Heart left ventricle (tissue), 16 donors: ENCODE measurements at regions of chr11 and their contacts with region 1.

Region 1: DNA sequence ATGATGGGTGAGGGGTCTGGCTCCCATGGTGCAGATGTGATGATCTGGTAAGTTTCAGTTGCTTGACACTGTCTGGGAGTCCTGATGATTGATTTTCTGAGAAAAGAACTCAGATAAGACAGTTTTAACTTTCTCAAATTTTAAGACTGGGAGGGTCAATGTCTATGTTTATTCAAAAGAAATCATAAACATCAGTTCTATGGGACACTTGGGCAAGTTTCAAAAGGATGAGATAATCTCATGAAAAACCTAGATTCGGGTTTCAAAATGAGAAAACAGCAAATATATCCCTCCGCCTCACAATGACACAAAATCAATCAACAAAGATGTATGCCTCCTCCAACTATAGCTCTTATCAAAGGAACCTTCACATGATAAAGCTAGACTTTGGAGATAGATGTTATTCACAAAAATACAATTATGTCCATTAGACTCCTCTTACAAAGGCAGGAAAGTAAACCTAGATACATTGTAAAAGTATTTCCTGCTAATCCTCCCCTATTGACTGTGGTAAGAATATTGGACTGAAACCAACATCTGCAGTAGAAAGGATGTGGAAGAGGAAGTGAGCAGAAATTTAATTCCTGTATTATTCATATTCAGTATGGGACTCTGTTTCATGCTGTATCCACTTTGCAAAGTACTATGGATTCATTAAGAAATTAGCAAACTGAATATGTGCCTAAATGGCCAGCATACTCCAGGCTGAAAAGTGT is 21.6 kb downstream of the SVIP start:
- DNase-seq: no peak
- ATAC-seq: peak in 2 of 4 donors; percentile 59 to 91
- H3K4me3 ChIP-seq: no peak overlapping the region
- H3K27ac ChIP-seq: peak overlapping the region in 10 of 12 donors; percentile 12 to 66 (median 54)
- H3K4me1 ChIP-seq: peaks cover 0 to 25% (median 17%) of the 10 kb centered on the region in 12 donors
- H3K27me3 ChIP-seq: no peaks in the 10 kb centered on the region
- CTCF ChIP-seq: no peak
- POLR2A ChIP-seq: no peak

Region 2: DNA sequence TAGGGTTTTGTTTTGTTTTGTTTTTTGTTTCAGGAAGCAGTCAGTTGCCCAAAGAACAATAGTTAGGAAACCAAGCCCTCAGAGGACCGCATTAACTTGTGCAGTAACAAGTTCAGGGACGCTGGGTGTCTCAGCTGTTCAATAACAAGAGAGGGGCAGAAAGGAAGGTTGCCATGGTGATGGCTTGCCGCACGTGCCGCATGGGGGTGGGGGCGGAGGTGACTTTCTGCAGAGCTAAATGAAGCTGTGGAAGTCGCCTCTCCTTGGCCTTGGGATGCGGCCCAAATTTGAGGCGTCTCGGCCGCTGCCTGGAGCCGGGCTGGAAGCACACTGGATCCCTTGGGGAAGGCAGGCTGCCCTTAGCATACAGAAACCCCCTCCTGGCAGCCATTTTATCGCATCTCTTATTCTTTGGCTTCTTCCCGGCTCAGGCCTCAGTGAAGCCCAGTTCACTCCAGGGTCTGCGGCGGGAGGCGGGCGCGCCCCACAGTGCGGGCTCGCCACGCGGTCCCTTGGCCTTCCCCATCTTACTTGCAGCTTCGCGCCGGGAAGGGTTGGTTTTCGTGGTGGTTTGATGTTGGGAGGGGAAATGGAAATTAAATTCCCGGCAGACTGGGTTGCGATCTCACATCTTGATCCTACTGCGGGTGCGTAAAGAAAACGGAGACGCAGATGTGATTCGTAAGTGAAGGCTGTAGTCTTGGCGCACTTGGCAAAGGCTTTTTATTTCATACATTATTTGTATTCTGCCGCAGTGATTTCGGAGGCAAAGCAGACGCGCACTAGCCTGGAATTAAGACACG is 375.5 kb before region 1 on chr11:
- intact Hi-C with region 1: loop called in 1 of 10 experiments (anchors 10 kb)
- DNase-seq: peak; percentile 45 to 63 (median 62)
- ATAC-seq: peak; percentile 51 to 83 (median 76)
- H3K4me3 ChIP-seq: peak overlapping the region in 11 of 12 donors; percentile 24 to 58 (median 44)
- H3K27ac ChIP-seq: peak overlapping the region in 6 of 12 donors; percentile 17 to 64 (median 42)
- H3K4me1 ChIP-seq: peaks cover 0 to 10% (median 0%) of the 10 kb centered on the region in 12 donors
- H3K27me3 ChIP-seq: peaks cover 0 to 12% (median 0%) of the 10 kb centered on the region in 9 donors
- CTCF ChIP-seq: no peak
- POLR2A ChIP-seq: no peak

Region 3: DNA sequence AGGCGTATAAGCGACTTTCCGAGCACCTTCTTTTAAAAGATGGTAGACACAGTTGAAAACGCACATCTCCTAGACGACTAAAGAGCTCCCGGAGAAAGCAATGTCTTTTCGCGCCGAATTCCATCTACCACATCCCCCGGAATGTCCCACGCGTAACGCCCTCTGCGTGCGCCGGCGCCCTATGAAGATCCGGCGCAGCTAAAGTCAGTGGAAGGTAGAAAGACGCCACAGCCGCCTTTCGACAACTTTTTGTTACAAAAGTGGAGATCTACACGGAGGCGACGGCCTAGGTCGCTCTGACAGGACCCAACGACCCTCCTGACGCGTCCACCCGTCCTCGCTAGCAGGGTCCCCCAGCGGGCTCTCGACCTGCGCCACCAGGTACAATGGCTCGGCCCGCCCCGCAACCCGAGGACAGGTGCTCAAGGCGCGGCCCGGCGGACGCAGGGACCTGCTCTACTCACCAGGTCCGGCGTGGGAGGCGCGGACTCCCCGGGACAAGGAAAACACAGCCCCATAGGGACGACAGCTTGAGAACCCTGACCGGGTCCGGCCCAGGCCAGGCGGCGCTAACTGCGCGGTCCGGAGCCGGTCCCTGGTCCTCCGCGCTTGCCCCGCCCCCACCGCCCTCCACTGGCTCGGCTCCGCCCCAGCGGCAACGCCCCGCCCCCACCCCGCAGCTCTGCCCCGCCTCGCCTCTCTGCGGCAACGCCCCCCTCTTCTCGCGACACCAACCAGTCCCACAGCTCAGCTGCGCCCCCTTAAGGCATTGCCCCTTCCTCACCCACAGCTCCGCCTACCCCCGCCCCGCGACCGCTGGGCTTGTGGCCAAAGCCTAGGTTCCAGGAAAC is 21.4 kb after region 1 on chr11 and contains the start of gene SVIP:
- intact Hi-C with region 1: loop called in 2 of 10 experiments (anchors 1 to 2 kb)
- DNase-seq: peak; percentile 95 to 97 (median 96)
- ATAC-seq: peak; percentile 95 to 100 (median 98)
- H3K4me3 ChIP-seq: peak within 1 kb of the TSS; percentile 73 to 96 (median 88)
- H3K27ac ChIP-seq: peak within 1 kb of the TSS; percentile 51 to 92 (median 86)
- H3K4me1 ChIP-seq: peaks cover 0 to 18% (median 8%) of the 10 kb centered on the region in 12 donors
- H3K27me3 ChIP-seq: no peaks in the 10 kb centered on the region
- CTCF ChIP-seq: peak; percentile 44 to 80 (median 67)
- POLR2A ChIP-seq: peak in 1 of 2 donors; percentile 66
- total RNA-seq, gene SVIP: 7.9 to 33.9 (median 23.4) TPM